PC-3 (cell line): ENCODE measurements at regions of chr6 and their contacts with region 1.

Region 1: DNA sequence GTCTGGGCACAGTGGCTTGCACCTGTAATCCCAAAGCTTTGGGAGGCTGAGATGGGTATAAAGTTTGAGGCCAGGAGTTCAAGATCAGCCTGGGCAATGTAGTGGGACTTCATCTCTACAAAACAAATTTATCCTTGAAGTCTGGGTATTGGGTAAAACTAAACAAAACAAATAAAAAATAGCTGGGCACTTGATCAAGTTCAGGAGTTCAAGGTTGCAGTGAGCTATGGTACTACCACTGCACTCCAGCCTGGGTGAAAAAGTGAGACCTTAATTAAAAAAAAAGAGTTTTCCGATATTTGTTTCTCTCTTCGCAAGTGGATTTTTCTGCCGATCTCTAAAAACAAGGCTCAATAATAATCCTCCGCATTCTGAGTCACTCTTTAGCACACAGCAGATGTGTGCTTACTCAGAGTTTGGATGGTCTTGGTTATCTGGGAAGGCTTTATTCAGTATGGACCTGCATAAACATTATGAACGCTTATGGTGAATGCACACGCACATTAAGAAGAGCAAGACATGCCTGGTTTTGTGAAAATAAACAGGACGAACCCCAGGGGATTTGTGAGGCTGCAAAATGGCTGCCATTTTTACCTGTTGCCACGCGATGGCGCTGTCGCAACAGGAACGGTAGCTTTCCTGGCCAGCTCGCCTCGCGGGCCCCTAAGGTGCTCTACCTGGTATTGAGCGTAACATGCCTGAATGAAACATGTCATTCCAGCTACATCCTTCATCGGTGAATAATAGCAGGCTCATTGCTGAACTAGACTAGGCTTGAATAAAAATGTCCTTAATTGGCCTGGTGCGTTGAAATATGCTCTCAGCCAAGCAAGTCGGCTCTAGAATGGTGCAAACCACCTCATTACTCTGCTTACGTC is 6.0 kb downstream of the OPN5 start:
- DNase-seq: peak; percentile 88
- ATAC-seq: peak; percentile 95
- H3K4me3 ChIP-seq: peak overlapping the region; percentile 27
- H3K27ac ChIP-seq: no peak overlapping the region
- H3K4me1 ChIP-seq: peaks cover 16% of the 10 kb centered on the region
- H3K27me3 ChIP-seq: no peaks in the 10 kb centered on the region
- CTCF ChIP-seq: peak; percentile 96

Region 2: DNA sequence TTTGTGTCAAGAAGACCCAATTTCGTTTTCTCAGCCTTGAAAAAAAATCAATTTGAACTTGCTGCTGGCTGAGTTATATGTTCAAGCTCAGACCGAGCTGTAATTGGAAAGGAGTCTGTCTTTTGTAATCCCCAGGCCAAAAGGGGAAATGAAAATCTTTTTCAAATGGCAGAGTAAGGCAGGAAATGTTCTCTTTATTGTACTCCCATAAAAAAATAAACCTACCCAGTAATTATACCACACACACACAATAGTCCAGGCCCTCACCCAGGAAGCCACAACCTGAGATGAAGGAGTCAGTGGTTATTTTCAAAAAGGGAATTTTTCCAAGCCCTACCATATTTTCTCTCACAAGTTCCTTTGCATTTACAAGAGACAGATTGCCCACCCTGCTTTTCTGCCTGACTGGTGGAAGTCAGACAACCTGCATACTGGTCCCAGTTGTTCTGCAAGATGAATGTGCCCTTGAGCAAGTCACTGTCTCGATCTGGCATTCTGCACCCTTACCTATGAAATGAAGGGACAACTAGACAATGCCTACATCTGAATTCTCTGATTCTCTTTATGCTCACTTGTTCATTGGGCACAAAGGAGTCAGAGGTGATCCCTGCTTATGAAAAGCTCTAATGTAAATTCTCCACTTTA is 1817.4 kb before region 1 on chr6:
- CTCF ChIA-PET with region 1: no interaction called
- POLR2A ChIA-PET with region 1: no interaction called
- intact Hi-C with region 1: no loop called
- DNase-seq: no peak
- ATAC-seq: no peak
- H3K4me3 ChIP-seq: no peak overlapping the region
- H3K27ac ChIP-seq: no peak overlapping the region
- H3K4me1 ChIP-seq: peaks cover 14% of the 10 kb centered on the region
- H3K27me3 ChIP-seq: no peaks in the 10 kb centered on the region
- CTCF ChIP-seq: no peak

Region 3: DNA sequence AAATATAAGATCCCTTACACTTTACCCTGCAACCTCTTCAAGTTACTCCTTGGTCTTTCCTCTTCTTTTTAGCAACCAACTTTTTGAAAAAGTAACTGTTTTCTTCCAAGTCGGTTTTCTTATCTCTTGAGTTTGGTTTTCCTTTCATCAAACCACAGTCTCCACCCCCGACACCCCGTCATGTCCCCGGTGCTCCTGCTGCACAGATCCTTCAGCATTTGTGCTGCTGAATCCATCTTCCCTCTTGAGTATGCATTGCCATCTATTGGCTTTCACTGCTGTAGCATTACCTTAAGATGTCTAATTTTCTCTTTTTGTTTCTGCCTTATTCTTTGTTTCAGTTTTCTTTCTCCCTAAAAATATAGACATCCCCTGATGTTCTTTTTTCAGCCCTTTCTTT is 466.3 kb before region 1 on chr6:
- CTCF ChIA-PET with region 1: no interaction called
- POLR2A ChIA-PET with region 1: no interaction called
- intact Hi-C with region 1: no loop called
- DNase-seq: no peak
- ATAC-seq: no peak
- H3K4me3 ChIP-seq: no peak overlapping the region
- H3K27ac ChIP-seq: no peak overlapping the region
- H3K4me1 ChIP-seq: no peaks in the 10 kb centered on the region
- H3K27me3 ChIP-seq: no peaks in the 10 kb centered on the region
- CTCF ChIP-seq: no peak

Region 4: GRCh38 chr6:48611332-48611731 is 823.5 kb after region 1 on chr6:
- CTCF ChIA-PET with region 1: no interaction called
- POLR2A ChIA-PET with region 1: no interaction called
- intact Hi-C with region 1: loop called (anchors 10 kb)
- DNase-seq: peak; percentile 92
- ATAC-seq: peak; percentile 92
- H3K4me3 ChIP-seq: no peak overlapping the region
- H3K27ac ChIP-seq: peak overlapping the region; percentile 56
- H3K4me1 ChIP-seq: peaks cover 15% of the 10 kb centered on the region
- H3K27me3 ChIP-seq: no peaks in the 10 kb centered on the region
- CTCF ChIP-seq: no peak

Region 5: GRCh38 chr6:48757661-48758060 is 969.8 kb after region 1 on chr6:
- CTCF ChIA-PET with region 1: no interaction called
- POLR2A ChIA-PET with region 1: no interaction called
- intact Hi-C with region 1: loop called (anchors 2 kb)
- DNase-seq: peak; percentile 93
- ATAC-seq: peak; percentile 94
- H3K4me3 ChIP-seq: peak overlapping the region; percentile 10; the same call in 1 of the 2 replicates
- H3K27ac ChIP-seq: peak overlapping the region; percentile 85
- H3K4me1 ChIP-seq: peaks cover 20% of the 10 kb centered on the region
- H3K27me3 ChIP-seq: no peaks in the 10 kb centered on the region
- CTCF ChIP-seq: no peak

Region 6: GRCh38 chr6:48765352-48765961 is 977.6 kb after region 1 on chr6:
- CTCF ChIA-PET with region 1: interaction called, 3 read pairs
- POLR2A ChIA-PET with region 1: no interaction called
- intact Hi-C with region 1: loop called (anchors 1 kb)
- DNase-seq: peak; percentile 87
- ATAC-seq: peak; percentile 82
- H3K4me3 ChIP-seq: no peak overlapping the region
- H3K27ac ChIP-seq: peak overlapping the region; percentile 79
- H3K4me1 ChIP-seq: peaks cover 34% of the 10 kb centered on the region
- H3K27me3 ChIP-seq: no peaks in the 10 kb centered on the region
- CTCF ChIP-seq: peak; percentile 87

Region 7: DNA sequence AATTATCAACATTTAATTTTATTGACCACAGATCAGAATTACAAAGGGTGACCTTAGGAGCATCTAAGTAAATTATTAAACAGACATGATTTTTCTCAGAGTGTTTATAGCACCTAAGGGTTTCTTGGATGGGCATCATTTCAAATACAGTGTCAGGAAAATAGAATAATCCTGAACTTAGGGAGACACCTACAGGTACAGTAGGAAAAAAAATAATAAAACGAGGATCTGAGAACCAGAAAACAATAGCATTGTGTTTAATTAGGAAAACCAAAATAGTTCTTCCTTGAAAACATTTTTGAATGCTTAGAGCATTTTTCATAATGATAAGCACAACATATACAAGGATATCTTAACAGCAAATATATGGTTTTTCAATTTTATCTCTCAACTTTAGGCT is 1636.0 kb after region 1 on chr6:
- CTCF ChIA-PET with region 1: no interaction called
- POLR2A ChIA-PET with region 1: no interaction called
- intact Hi-C with region 1: loop called (anchors 1 kb)
- DNase-seq: peak; percentile 55
- ATAC-seq: peak; percentile 55
- H3K4me3 ChIP-seq: no peak overlapping the region
- H3K27ac ChIP-seq: no peak overlapping the region
- H3K4me1 ChIP-seq: no peaks in the 10 kb centered on the region; the same call in 1 of the 2 replicates
- H3K27me3 ChIP-seq: no peaks in the 10 kb centered on the region
- CTCF ChIP-seq: peak; percentile 73